Mammary epithelial cell (primary cell): ENCODE measurements at regions of chr19 and their contacts with region 1.

Region 1: DNA sequence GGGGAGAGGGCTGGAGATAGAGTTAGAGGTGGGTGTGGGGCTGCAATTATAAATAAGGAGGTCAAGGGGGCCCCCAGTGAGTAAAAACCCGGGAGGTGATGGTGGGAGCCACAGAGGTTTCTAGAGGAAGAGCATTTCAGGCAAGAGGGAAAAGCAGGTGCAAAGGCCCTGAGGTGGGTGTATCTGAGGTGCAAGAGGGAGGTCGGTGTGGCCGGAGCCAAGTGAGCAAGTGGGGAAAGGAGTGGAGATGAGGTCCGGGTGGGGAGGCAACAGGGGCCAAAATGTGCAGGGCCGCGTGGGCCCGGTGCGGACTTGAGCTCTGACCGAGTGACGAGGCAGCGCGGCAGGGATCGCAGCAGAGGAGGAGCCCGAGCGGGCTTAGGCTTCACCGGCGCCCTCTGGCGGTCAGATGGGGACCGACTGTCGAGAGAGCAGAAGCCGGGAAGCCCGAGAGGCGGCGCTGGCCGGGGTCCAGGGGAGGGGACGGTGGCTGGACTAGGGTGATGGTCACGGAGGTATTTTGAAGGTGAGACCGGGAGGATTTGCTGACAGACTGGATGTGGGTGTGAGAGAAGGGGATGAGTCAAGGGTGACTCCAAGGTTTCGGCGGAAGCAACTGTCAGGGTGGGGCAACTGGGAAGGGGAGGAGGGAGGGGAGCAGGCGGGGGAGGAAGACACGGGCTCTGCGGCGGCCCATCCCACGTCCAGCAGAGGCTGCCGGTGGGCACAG is 17.7 kb upstream of the SPACA4 start:
- DNase-seq: peak; percentile 98
- H3K4me3 ChIP-seq: peak overlapping the region in 1 of 3 experiments; percentile 3
- H3K27ac ChIP-seq: peak overlapping the region; percentile 50
- H3K4me1 ChIP-seq: peaks cover 10% of the 10 kb centered on the region
- H3K27me3 ChIP-seq: no peaks in the 10 kb centered on the region
- CTCF ChIP-seq: peak; percentile 76 to 97

Region 2: DNA sequence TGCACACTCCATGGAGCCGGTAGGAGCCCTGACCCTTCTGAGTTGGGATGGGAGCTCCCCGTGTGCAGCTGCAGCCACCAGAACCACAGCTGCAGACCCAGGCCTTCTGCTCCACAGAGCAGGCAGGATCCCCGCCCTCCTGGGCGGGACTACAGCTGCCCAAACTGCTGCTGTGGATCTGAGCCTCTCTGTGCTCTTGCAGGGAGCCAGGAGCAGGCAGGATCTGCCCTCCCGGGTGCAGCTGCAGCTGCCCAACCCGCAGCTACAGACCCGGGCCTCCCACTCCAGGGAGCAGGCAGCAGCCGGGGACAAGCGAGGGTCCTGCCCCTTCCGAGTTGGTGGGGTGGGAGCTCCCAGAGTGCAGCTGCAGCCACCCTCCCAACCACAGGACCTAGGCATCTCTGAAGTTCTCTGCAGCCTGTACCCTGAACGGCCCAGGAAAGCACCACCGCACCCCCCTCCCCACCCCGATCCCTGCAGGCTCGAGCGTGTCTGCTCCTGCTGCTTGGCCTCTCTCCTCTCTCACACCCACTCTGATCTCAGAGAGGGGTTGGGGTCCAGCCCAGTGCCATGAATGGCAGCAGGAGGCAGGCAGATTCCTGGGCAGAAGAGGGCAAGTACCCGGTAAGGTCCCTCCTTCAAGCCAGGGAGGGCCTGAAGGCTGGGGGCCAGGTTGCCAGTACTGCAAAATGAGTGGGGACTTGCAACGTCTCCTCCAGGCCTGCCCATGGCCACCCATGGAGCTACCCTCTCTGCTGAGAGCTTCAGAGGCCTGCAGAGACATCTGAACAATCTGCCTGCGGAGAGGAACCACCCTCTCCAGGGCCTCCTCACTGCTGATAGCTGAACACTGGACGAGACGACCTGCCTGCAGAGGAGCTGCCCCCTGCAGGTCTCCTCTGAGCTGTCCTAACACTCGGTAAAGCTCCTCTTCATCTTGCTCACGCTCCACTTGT is 279.9 kb before region 1 on chr19:
- CTCF ChIA-PET with region 1: no interaction called
- dilution Hi-C with region 1: no loop called
- in situ Hi-C with region 1: loop called (anchors 10 to 25 kb)
- intact Hi-C with region 1: no loop called
- DNase-seq: no peak
- H3K4me3 ChIP-seq: no peak overlapping the region
- H3K27ac ChIP-seq: no peak overlapping the region
- H3K4me1 ChIP-seq: peaks cover 8% of the 10 kb centered on the region
- H3K27me3 ChIP-seq: no peaks in the 10 kb centered on the region
- CTCF ChIP-seq: peak in 1 of 2 donors; percentile 53

Region 3: DNA sequence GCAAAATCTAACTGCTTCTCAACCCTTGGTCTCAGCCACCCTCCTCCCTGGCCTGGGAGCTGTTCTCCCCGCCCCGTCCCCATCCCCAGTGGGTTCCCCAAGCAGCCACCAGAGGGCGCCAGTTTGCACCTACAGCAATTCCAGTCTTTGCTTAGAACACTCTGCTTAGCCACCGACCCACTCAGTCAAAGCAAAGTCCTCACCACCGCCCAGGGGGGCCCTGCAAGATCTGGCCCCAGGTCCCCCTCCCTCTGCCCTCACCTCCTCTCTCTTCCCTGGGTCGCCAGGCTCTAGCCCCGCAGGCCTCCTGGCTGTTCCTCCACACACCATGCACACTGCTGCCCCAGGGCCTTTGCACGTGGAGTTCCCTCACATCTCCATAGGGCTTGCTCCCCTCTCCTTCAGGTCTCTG is 237.5 kb before region 1 on chr19:
- CTCF ChIA-PET with region 1: no interaction called
- dilution Hi-C with region 1: no loop called
- in situ Hi-C with region 1: no loop called
- intact Hi-C with region 1: loop called (anchors 1 kb)
- DNase-seq: peak; percentile 32
- H3K4me3 ChIP-seq: no peak overlapping the region
- H3K27ac ChIP-seq: no peak overlapping the region
- H3K4me1 ChIP-seq: no peaks in the 10 kb centered on the region
- H3K27me3 ChIP-seq: no peaks in the 10 kb centered on the region
- CTCF ChIP-seq: peak; percentile 78 to 85

Region 4: GRCh38 chr19:48445606-48446481 is 143.0 kb before region 1 on chr19 and contains the start of gene GRWD1:
- CTCF ChIA-PET with region 1: interaction called, 3 read pairs
- dilution Hi-C with region 1: no loop called
- in situ Hi-C with region 1: no loop called
- intact Hi-C with region 1: loop called (anchors 1 kb)
- DNase-seq: peak; percentile 98
- H3K4me3 ChIP-seq: peak within 1 kb of the TSS; percentile 69 to 92 (median 80)
- H3K27ac ChIP-seq: peak within 1 kb of the TSS; percentile 88
- H3K4me1 ChIP-seq: peaks cover 22% of the 10 kb centered on the region
- H3K27me3 ChIP-seq: peaks cover 19% of the 10 kb centered on the region
- CTCF ChIP-seq: peak in 1 of 2 donors; percentile 18
- total RNA-seq, gene GRWD1: 35.3 to 45.9 TPM

Region 5: GRCh38 chr19:48501496-48502350 is 87.1 kb before region 1 on chr19:
- CTCF ChIA-PET with region 1: interaction called, 54 read pairs
- dilution Hi-C with region 1: no loop called
- in situ Hi-C with region 1: loop called (anchors 5 kb)
- intact Hi-C with region 1: loop called (anchors 1 kb)
- DNase-seq: peak; percentile 97
- H3K4me3 ChIP-seq: peak overlapping the region; percentile 28 to 54 (median 47)
- H3K27ac ChIP-seq: no peak overlapping the region
- H3K4me1 ChIP-seq: peaks cover 13% of the 10 kb centered on the region
- H3K27me3 ChIP-seq: peaks cover 7% of the 10 kb centered on the region
- CTCF ChIP-seq: no peak

Region 6: GRCh38 chr19:48637170-48637947 is 48.5 kb after region 1 on chr19 and contains the start of gene DBP:
- CTCF ChIA-PET with region 1: no interaction called
- dilution Hi-C with region 1: no loop called
- in situ Hi-C with region 1: no loop called
- intact Hi-C with region 1: loop called (anchors 2 kb)
- DNase-seq: peak; percentile 97
- H3K4me3 ChIP-seq: peak within 1 kb of the TSS; percentile 38 to 70 (median 51)
- H3K27ac ChIP-seq: peak within 1 kb of the TSS; percentile 45
- H3K4me1 ChIP-seq: peaks cover 45% of the 10 kb centered on the region
- H3K27me3 ChIP-seq: no peaks in the 10 kb centered on the region
- CTCF ChIP-seq: no peak
- total RNA-seq, gene DBP: 0.73 to 2.2 TPM